ENCODE measurements at regions of chr10 and their contacts with region 1.

Region 1: GRCh38 chr10:12195603-12196506 is at the starts of genes CDC123 and NUDT5:
- DNase-seq: peak; percentile 92
- H3K4me3 Mint-ChIP-seq: peak within 1 kb of the TSS; percentile 99
- H3K27ac Mint-ChIP-seq: peak within 1 kb of the TSS; percentile 99
- H3K4me1 Mint-ChIP-seq: peaks cover 24% of the 10 kb centered on the region
- H3K27me3 Mint-ChIP-seq: no peaks in the 10 kb centered on the region
- CTCF ChIP-seq: no peak
- total RNA-seq, gene CDC123: 113 and 114 TPM in 2 replicates
- total RNA-seq, gene NUDT5: 77.7 and 84.2 TPM in 2 replicates

Region 2: DNA sequence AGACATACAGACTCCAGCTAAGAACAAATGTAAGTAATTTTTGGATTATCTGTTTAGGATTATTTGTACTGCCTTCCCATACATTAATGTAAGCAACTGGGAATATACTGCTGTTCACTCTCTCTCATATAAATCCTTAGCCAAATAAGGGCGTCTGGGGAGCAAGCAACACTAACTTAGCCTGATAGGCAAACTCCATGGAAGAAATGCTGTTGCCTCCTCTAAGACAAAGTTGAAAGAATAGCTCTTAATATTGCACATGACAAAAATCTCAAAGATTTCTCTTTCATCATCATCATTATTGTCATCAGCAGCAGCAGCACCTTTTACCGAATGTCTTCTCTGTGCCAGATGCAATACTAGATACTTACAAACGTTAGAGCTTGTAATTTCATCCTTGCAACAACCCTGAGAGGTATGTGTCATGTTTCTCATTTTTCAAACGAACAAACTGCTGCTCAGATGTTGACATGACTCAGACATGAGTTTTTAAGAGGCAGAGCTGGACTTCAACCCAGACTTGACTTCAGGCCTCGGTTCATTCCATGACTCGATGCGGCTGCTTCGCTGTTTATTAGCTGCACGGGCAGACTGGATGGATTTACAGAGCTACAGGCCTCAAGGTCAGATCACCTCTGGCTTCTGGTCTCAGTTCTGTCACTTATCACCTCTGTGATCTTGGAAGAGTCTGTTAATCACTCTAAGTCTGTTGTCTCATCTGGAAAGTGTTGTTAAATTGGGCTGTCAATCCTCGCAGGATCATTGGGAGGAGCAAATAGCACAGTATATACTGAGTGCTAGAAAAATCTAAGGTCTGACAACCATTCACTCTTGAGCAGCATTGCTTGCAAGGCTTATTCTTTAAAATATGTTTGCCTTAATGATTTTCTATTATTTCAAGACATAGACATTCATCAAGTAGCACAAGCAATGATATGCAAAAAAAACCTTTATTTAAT is 1304.5 kb before region 1 on chr10:
- CTCF ChIA-PET with region 1: no interaction called
- POLR2A ChIA-PET with region 1: no interaction called
- intact Hi-C with region 1: no loop called
- DNase-seq: peak; percentile 45
- H3K4me3 Mint-ChIP-seq: no peak overlapping the region
- H3K27ac Mint-ChIP-seq: no peak overlapping the region
- H3K4me1 Mint-ChIP-seq: peaks cover 8% of the 10 kb centered on the region
- H3K27me3 Mint-ChIP-seq: no peaks in the 10 kb centered on the region
- CTCF ChIP-seq: no peak

Region 3: GRCh38 chr10:11782793-11783557 is 412.9 kb before region 1 on chr10:
- CTCF ChIA-PET with region 1: interaction called, 3 read pairs
- POLR2A ChIA-PET with region 1: no interaction called
- intact Hi-C with region 1: loop called (anchors 10 kb)
- DNase-seq: peak; percentile 73
- H3K4me3 Mint-ChIP-seq: no peak overlapping the region
- H3K27ac Mint-ChIP-seq: no peak overlapping the region
- H3K4me1 Mint-ChIP-seq: no peaks in the 10 kb centered on the region
- H3K27me3 Mint-ChIP-seq: no peaks in the 10 kb centered on the region
- CTCF ChIP-seq: peak; percentile 53

Region 4: DNA sequence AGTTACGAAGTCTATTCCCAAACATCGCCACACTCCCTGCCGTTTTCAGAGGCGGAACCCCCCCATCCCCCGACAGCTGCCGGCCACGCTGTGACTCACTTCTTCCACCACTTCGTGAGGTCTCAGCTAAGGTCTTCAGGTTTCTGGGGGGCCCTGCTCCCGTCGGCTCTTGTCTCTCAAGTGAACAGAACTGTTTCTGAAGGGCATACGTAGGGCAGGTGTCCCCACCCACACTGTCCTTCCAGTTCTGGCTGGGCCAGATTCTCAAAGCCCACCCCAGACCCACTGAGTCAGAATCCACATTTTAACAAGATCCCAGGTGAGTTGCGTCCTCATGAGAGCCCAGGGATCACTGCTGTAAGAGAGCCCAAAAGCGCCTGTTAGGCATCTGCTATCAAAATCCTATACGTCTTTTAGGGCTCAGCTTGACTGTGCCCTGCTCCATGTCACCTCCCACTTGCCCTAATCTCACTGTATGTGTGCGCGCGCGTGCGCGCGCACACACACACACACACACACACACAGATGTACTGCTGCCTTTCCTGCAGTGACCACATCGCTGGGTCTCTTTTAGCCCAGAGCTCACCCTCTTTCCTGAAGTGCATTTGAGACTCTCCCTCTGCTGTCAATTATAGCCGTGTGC is 293.9 kb before region 1 on chr10:
- CTCF ChIA-PET with region 1: no interaction called
- POLR2A ChIA-PET with region 1: no interaction called
- intact Hi-C with region 1: no loop called
- DNase-seq: no peak
- H3K4me3 Mint-ChIP-seq: no peak overlapping the region
- H3K27ac Mint-ChIP-seq: peak overlapping the region; percentile 67
- H3K4me1 Mint-ChIP-seq: peaks cover 15% of the 10 kb centered on the region
- H3K27me3 Mint-ChIP-seq: no peaks in the 10 kb centered on the region
- CTCF ChIP-seq: no peak

Region 5: GRCh38 chr10:11949152-11949551 is 246.7 kb before region 1 on chr10:
- CTCF ChIA-PET with region 1: no interaction called
- POLR2A ChIA-PET with region 1: no interaction called
- intact Hi-C with region 1: no loop called
- DNase-seq: no peak
- H3K4me3 Mint-ChIP-seq: no peak overlapping the region
- H3K27ac Mint-ChIP-seq: no peak overlapping the region
- H3K4me1 Mint-ChIP-seq: no peaks in the 10 kb centered on the region
- H3K27me3 Mint-ChIP-seq: no peaks in the 10 kb centered on the region
- CTCF ChIP-seq: no peak

Region 6: GRCh38 chr10:12042797-12043651 is 152.8 kb before region 1 on chr10 and contains the start of gene UPF2:
- CTCF ChIA-PET with region 1: no interaction called
- POLR2A ChIA-PET with region 1: interaction called, 32 read pairs
- intact Hi-C with region 1: no loop called
- DNase-seq: peak; percentile 98
- H3K4me3 Mint-ChIP-seq: peak within 1 kb of the TSS; percentile 97
- H3K27ac Mint-ChIP-seq: peak within 1 kb of the TSS; percentile 100
- H3K4me1 Mint-ChIP-seq: peaks cover 12% of the 10 kb centered on the region
- H3K27me3 Mint-ChIP-seq: no peaks in the 10 kb centered on the region
- CTCF ChIP-seq: no peak
- total RNA-seq, gene UPF2: 24.3 and 24.7 TPM in 2 replicates

Region 7: GRCh38 chr10:12129222-12130111 is 66.4 kb before region 1 on chr10 and contains the start of gene SEC61A2:
- CTCF ChIA-PET with region 1: interaction called, 3 read pairs
- POLR2A ChIA-PET with region 1: interaction called, 25 read pairs
- intact Hi-C with region 1: no loop called
- DNase-seq: peak; percentile 90
- H3K4me3 Mint-ChIP-seq: peak within 1 kb of the TSS; percentile 68
- H3K27ac Mint-ChIP-seq: peak within 1 kb of the TSS; percentile 67
- H3K4me1 Mint-ChIP-seq: peaks cover 12% of the 10 kb centered on the region
- H3K27me3 Mint-ChIP-seq: no peaks in the 10 kb centered on the region
- CTCF ChIP-seq: no peak
- total RNA-seq, gene SEC61A2: 11.4 and 17.4 TPM in 2 replicates

Measured in MCF 10A (cell line).